Right ventricle myocardium superior (tissue), 1 donor: ENCODE measurements at regions of chr6 and their contacts with region 1.

Region 1: GRCh38 chr6:19024737-19025136 is 637.6 kb downstream of the RNF144B start:
- DNase-seq: no peak
- ATAC-seq: peak; percentile 77

Region 2: GRCh38 chr6:18216411-18216810 is 808.3 kb before region 1 on chr6:
- intact Hi-C with region 1: no loop called
- DNase-seq: no peak
- ATAC-seq: no peak

Region 3: DNA sequence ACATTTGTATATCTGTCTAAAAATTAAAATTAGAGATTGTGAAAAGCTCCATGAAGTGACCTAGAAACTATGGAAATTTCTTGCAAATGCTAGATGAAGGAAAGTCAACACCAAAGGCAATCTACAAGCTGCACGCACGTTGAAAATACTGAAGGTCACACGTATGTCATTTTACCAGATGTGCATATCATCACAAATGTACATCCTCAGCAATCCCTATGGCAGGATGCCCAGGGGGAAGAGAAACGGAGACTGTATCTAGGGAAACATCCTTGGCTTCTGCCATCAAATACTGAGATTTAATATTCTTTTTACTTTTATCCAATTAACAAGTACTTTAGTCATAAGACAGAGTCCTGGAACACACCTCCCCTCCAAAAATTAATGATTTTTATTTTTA is 34.4 kb after region 1 on chr6:
- intact Hi-C with region 1: no loop called
- DNase-seq: no peak
- ATAC-seq: no peak

Region 4: DNA sequence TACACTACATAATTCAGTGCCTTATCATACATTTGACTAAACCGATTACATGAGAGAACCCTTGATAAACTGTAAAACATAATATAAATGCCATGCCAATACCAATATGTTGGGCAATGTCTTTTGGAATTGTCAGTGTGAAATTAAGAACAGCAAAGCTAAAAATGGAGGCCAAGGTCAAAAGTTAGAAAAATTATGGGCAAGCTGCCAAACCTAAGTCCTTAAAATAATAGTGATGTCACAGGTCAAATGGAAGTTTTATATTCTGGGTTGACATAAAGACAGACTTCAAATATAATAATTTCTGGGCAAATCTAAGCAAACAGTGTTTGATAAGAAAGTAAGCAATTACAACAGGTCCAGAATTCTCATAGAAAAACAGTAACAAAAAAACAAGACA is 59.1 kb after region 1 on chr6:
- intact Hi-C with region 1: no loop called
- DNase-seq: no peak
- ATAC-seq: no peak

Region 5: DNA sequence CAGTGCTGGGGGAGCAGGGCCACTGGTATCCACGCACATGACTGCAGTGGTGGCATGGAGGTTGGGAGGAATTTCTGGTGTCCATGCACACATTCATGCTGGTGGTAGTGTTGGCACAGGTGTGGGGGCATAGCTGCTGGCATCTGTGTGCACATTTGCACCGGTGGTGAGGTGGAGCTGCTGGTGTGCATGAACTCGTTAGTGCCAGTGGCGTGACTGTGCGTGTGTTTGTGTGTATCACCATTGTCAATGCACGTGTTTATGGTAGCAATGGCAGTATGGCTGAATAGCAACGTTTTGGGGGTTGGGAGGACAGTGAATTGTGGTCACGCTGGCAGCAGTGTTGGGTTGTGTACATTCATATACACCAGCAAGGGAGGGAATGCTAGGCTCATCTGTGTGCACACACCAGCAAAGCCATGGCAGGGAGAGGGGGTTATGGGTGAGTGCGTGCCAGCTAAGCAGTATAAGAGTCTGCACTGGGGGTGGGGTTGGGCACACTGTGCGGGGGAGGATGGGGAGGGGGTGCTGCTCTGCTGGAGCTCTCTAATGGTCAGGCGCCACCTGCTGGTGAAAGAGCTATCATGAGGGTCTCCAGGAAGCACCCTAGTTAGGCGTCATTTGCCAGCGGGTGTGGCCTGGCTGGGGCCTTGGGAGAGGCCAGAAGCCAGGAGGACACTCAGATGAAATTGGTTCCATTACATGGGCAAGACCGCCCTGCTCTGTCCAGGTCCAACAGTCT is 186.3 kb after region 1 on chr6:
- intact Hi-C with region 1: loop called (anchors 5 kb)
- DNase-seq: peak; percentile 47
- ATAC-seq: peak; percentile 45